Activated CD8-positive, alpha-beta T cell treated with anti-CD3 and anti-CD28 coated beads, Interleukin-2, amount 10 ng/mL, durations not matched to agents 7 days and 5 days (primary cell): ENCODE measurements at regions of chr14 and their contacts with region 1.

Region 1: DNA sequence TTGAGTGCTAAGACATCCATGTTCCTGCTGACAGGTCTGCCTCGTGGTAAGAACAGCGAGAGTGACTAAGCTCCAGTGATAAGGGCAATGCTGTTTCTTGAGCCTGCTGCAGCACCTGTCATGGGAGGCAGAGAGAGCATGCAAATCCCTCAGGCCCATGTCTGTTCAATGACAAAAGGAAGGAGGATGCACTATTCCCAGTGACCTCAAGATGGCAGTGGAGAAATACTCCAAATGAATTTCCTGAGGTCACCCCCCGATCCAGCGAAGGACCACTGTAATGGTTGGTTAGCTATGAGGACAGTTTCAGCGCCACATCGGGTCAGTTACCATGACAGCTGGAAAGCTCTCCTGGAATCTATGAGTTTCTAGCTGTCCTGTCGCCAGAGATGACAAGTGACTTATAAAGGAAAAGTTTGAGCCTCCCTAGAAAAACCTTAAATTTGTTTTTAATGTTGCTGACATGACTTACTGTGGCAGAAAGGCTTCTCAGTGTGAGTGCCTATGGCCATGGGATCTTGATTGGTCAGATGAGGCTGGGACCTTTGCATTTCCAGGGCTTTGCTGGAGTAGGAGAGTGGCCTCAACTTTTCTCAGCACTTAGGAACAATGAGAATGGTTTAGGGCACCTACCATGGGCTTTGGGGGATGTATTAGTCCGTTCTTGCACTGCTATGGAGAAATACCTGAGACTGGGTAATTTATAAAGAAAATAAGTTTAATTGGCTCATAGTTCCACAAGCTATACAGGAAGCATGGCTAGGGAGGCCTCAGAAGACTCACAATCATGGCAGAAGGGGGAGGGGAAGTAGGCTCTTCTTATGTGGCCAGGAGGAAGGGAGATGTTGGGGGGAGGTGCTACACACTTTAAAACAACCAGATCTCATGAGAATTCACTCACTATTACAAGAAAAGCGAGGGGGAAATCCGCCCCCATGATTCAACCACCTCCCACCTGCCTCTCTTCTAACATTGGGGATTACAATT is 88.0 kb upstream of the TMEM260 start:
- DNase-seq: peak; percentile 48
- ATAC-seq: peak; percentile 57
- H3K4me3 Mint-ChIP-seq: no peak overlapping the region
- H3K27ac Mint-ChIP-seq: no peak overlapping the region
- H3K4me1 Mint-ChIP-seq: peaks cover 6% of the 10 kb centered on the region
- H3K27me3 Mint-ChIP-seq: peaks cover 5% of the 10 kb centered on the region

Region 2: DNA sequence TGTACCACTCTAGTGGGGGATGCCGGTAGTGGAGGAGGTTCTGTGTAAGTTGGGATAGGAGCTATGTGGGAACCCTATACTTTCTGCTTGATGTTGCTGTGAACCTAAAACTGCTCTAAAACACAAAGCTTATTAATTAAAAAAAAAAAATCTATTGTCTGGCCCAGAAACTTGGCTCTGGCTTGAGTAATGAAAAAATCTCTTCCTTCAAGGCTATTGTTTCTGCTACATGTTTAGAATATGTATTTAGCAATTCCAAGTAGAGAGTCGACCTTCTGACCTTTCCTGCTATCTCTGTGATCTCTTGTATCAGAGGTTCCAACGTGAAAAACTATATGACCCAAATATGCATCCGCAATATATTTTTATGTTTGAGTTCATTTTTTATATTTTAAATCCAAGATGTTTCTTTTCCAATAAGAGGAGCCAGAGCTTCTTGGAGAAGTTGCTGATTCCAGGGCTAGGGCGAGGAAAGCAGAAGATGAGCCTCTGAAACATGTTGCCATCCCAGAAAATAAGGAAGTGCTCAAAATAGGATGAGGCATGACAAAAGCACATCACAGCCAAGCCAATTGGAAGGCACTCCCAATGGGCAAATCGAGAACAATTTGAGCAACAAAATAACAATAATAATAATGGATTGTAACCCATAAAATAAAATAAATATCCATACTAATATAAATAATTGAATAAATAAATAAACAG is 96.6 kb before region 1 on chr14:
- CTCF ChIA-PET with region 1: no interaction called
- POLR2A ChIA-PET with region 1: no interaction called
- DNase-seq: no peak
- ATAC-seq: no peak
- H3K4me3 Mint-ChIP-seq: no peak overlapping the region
- H3K27ac Mint-ChIP-seq: no peak overlapping the region
- H3K4me1 Mint-ChIP-seq: no peaks in the 10 kb centered on the region
- H3K27me3 Mint-ChIP-seq: no peaks in the 10 kb centered on the region

Region 3: GRCh38 chr14:56474419-56475022 is 17.1 kb before region 1 on chr14:
- CTCF ChIA-PET with region 1: interaction called, 10 read pairs
- POLR2A ChIA-PET with region 1: no interaction called
- DNase-seq: peak; percentile 23
- ATAC-seq: no peak
- H3K4me3 Mint-ChIP-seq: no peak overlapping the region
- H3K27ac Mint-ChIP-seq: no peak overlapping the region
- H3K4me1 Mint-ChIP-seq: no peaks in the 10 kb centered on the region
- H3K27me3 Mint-ChIP-seq: peaks cover 16% of the 10 kb centered on the region

Region 4: DNA sequence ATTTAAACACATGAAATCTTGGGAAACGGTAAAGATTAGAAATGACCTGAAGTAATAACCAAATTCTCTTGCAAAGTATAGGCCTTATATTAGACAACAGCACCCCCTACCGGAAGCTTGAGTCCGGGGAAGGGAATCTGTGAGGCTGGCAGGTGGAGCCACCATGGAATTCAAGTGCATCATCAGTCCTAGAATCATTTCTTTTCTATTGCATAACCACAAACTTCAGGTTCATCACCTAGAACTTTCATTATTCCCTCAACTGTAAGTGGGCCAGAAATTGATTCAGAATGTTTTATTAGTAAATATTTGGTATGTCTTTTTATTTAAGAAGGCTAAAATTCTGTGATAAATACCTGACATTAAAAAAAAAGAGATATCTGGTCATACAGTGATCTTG is 825.7 kb after region 1 on chr14:
- CTCF ChIA-PET with region 1: interaction called, 16 read pairs
- POLR2A ChIA-PET with region 1: no interaction called
- DNase-seq: peak; percentile 81
- ATAC-seq: peak; percentile 68
- H3K4me3 Mint-ChIP-seq: no peak overlapping the region
- H3K27ac Mint-ChIP-seq: no peak overlapping the region
- H3K4me1 Mint-ChIP-seq: peaks cover 5% of the 10 kb centered on the region
- H3K27me3 Mint-ChIP-seq: no peaks in the 10 kb centered on the region